GM18951 (cell line): ENCODE measurements at regions of chr10 and their contacts with region 1.

Region 1: DNA sequence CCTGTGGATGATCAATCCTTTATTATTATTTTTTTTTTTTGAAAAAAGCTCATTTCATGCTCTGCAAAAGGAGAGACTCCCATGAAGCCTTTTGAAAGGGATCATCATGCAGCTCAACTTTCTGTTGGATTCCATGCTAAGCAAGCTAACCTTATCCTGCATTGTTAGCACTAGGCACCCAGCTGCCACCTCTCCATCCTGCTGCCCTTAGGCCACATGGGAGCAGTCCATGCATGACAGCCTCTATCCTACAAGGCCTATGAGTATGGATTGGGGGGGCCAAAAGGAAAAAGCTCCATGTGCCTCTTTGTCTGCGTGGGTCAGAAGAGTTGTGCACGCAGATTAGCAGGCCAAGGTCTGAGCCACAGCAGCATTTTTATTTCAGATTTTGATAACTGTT is 19.2 kb downstream of the SMNDC1 start:
- POLR2A ChIP-seq: no peak

Region 2: DNA sequence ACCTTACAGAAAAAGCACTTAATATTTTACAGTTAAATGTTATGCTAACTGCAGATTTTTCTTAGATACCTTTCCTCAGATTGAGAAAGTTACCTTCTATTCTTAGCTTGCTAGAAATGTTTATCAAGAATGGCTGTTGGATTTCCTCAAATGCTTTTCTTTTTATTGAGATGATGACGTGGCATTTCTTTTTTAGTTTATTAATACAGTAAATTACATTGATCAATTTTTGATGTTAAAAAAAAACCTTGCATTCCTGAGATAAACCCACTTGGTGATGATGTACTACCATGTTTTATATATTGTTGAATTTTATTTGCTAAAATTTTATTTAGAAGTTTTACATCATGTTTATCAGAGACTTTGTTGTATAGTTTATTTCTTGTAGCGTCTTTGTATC is 570.6 kb before region 1 on chr10:
- in situ Hi-C with region 1: no loop called
- POLR2A ChIP-seq: no peak

Region 3: DNA sequence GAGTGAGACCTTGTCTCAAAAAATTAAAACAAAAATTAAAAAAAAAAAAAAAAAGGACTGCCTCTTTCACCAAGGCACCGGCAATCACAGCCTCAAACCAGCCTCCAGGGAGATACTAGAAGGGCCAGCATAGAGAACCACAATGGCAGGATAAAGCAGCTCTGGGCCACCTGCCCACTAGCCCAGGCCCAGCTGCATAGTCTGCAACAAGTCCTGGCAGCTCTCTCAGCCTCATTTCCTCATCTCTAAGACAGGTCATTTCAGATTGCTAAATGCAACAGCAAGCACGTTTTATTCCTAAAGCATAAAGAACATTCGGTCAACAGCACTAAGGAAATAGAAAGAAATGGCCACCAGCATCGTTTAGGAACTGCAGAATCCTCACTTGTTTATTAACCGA is 391.0 kb before region 1 on chr10:
- in situ Hi-C with region 1: loop called (anchors 10 kb)
- POLR2A ChIP-seq: no peak

Region 4: DNA sequence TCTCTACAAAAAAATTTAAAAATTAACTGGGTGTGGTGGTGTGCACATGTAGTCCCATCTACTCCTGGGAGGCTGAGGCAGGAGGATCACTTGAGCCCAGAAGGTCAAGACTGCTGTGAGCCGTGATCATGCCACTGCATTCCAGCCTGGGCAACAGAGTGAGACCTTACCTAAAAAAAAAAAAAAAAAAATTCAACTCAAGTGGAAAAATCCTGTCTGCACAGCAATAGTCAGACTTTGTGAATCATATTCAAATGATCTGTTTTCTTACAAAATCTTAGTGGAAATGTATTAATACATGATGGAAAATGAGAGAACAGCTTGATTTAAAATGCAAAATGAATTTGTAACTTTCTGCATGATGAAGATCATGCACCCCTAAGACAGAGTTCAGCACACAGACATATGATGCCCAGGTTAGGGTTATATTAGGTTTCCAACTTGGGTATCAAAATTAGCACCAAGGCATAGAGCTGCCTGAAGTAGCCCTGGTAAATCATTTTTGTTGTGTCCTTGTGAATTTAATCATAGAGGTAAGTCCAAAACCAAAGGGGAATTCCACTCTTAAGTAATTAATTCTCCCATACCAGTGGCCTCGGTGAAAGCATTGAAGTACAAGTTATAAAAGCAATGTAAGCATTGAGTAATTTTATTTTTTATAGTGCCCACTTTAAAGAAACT is 183.9 kb before region 1 on chr10:
- in situ Hi-C with region 1: no loop called
- POLR2A ChIP-seq: no peak

Region 5: DNA sequence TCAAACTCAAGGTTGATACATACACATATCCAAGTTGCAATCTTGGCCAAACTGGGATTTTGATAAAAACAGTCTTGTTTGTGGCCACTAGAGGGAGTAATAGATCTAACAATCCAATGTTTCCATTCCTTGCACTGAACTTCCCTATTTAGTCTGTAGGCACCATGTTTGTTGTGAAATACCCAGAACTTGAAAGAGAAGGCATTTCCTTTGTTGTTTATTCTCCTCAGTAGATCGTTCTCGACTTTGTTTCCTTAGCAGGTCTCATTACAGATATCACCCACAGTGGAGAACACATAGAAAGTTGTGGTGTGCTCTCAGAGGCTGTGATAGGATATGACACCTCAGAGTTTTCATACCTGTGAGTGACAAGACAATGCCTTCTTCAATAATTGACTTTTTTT is 148.4 kb before region 1 on chr10:
- in situ Hi-C with region 1: loop called (anchors 5 kb)
- POLR2A ChIP-seq: no peak

Region 6: DNA sequence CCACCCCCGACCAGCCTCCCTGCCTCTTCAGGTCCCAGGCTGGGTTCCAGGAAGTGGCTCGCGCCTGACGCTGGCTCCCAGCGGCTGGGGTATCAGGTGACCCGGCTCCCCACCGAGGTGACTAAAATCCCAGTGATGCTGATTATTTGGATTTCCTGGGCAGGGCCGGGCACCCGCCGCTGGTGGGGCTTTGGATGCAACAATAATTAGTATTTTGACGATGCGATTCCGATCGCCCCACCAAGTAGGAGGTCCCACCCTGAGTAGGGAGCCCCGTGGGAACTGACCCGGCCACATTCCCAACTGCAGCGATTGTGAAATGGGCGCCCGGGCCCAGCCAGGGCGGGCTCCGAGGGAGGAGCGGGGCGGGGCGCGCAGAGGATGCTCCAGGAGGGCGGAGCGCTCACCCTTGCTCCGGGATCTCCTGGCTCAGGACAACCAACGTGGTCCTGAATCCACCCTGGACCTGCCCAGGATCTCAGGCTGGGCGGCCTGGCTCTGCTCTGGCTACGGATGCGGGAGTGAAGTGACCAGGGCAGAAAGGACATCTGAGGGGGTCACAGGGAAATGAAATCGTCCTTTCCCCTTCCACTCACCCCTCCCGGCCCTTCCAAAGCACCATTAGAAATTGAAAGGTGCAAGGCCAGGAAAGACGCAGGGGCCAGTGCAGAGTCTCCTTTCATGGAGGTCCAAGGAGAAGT is 244.8 kb after region 1 on chr10:
- in situ Hi-C with region 1: no loop called
- POLR2A ChIP-seq: no peak